ENCODE measurements at regions of chr6 and their contacts with region 1.

Region 1: DNA sequence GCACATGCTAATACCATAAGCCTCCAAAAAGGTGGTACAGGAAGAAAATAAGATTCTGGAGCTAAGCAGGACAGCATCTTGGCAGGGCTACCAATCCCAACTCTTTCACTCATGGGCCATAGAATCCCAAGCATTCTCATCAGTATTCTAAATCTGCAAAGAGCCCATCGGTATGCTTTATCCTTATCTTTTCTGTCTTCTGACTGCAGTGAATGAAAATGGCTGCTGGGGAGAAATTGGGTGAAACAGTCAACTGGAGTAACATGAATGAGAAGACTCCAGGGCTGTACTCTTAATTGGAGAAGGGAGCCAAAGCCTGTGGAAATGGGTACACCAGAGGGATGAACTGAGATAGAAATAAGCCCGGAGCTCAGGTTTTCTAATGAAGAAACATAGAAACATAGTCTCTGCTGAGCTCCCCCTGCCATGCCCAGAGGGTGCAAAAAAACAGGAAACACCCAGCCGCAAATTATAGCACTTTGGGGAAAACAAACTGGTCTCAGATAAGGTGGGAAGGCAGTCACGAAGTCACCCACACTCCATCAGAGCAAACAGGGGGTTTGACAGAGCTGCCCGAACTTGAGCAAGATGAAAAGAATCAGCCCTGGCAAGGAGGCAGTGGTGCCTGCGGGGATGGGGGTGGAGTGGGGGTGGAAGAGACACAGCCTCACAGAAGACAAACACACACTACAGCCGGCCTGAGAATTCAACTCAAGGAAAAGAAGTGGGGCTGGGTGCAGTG is 35.4 kb upstream of the E2F3 start:
- DNase-seq: peak; percentile 8 to 78 (median 58)
- ATAC-seq: peak; percentile 68
- H3K4me3 ChIP-seq: peak overlapping the region; percentile 9
- H3K4me3 Mint-ChIP-seq: peak overlapping the region; percentile 74
- H3K27ac ChIP-seq: peak overlapping the region; percentile 37 to 84
- H3K27ac Mint-ChIP-seq: peak overlapping the region; percentile 91
- H3K4me1 ChIP-seq: peaks cover 53% of the 10 kb centered on the region
- H3K4me1 Mint-ChIP-seq: peaks cover 59% of the 10 kb centered on the region
- H3K27me3 ChIP-seq: no peaks in the 10 kb centered on the region
- H3K27me3 Mint-ChIP-seq: no peaks in the 10 kb centered on the region
- CTCF ChIP-seq: no peak

Region 2: GRCh38 chr6:20212392-20213217 is 153.7 kb before region 1 on chr6 and contains the start of gene MBOAT1:
- CTCF ChIA-PET with region 1: no interaction called
- POLR2A ChIA-PET with region 1: interaction called, 12 read pairs
- intact Hi-C with region 1: no loop called
- DNase-seq: peak; percentile 27 to 86 (median 56)
- ATAC-seq: peak; percentile 78
- H3K4me3 ChIP-seq: peak within 1 kb of the TSS; percentile 83
- H3K4me3 Mint-ChIP-seq: peak within 1 kb of the TSS; percentile 99
- H3K27ac ChIP-seq: peak within 1 kb of the TSS; percentile 61 to 78
- H3K27ac Mint-ChIP-seq: peak within 1 kb of the TSS; percentile 97
- H3K4me1 ChIP-seq: peaks cover 28% of the 10 kb centered on the region
- H3K4me1 Mint-ChIP-seq: peaks cover 48% of the 10 kb centered on the region
- H3K27me3 ChIP-seq: no peaks in the 10 kb centered on the region
- H3K27me3 Mint-ChIP-seq: no peaks in the 10 kb centered on the region
- CTCF ChIP-seq: no peak
- total RNA-seq, gene MBOAT1: 17.2 to 18.5 TPM

Region 3: GRCh38 chr6:20334334-20334733 is 31.9 kb before region 1 on chr6:
- CTCF ChIA-PET with region 1: no interaction called
- POLR2A ChIA-PET with region 1: interaction called, 45 read pairs
- intact Hi-C with region 1: no loop called
- DNase-seq: no peak
- ATAC-seq: no peak
- H3K4me3 ChIP-seq: no peak overlapping the region
- H3K4me3 Mint-ChIP-seq: no peak overlapping the region
- H3K27ac ChIP-seq: peak overlapping the region in 1 of 2 donors; percentile 0
- H3K27ac Mint-ChIP-seq: no peak overlapping the region
- H3K4me1 ChIP-seq: peaks cover 5% of the 10 kb centered on the region
- H3K4me1 Mint-ChIP-seq: peaks cover 33% of the 10 kb centered on the region
- H3K27me3 ChIP-seq: no peaks in the 10 kb centered on the region
- H3K27me3 Mint-ChIP-seq: no peaks in the 10 kb centered on the region
- CTCF ChIP-seq: no peak

Region 4: DNA sequence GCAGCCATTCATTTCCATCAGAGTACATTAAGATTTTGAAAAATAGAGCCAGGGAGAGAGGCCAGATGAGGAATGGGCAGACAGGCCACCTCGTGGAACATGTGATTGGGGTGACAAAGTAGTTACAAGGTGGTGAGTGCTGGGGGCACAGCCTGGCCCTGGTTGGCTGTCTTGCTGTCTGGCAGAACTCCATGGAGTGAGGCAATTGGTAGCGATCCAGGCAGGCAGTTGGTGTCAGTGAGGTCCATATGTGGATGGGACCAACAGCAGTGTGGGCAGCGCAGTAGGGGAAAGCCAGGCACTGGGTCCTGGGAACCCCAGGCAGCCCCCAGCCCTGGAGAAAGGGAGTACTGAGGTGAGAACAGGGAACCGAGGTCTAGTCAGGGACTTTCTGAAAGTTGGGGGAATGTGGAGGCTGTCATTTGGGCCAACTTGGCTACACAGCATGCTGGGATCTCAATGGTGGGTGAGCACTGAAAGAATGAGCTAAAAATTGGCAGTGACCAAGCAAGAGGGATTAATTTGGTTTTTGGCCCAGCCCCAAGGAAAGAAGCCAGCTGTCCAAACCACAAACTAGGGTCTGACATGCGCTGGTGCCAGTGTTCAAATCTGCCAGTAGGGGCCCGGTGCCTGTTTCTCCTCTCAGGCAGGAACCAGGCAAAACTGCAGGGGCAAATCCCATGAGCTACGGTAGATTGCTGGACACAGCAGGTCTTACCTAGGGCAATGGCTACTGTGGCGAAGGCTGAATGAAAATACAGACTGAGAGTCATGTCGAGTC is 26.0 kb before region 1 on chr6:
- CTCF ChIA-PET with region 1: no interaction called
- POLR2A ChIA-PET with region 1: interaction called, 45 read pairs
- intact Hi-C with region 1: no loop called
- DNase-seq: no peak
- ATAC-seq: no peak
- H3K4me3 ChIP-seq: no peak overlapping the region
- H3K4me3 Mint-ChIP-seq: no peak overlapping the region
- H3K27ac ChIP-seq: no peak overlapping the region
- H3K27ac Mint-ChIP-seq: no peak overlapping the region
- H3K4me1 ChIP-seq: peaks cover 5% of the 10 kb centered on the region
- H3K4me1 Mint-ChIP-seq: peaks cover 32% of the 10 kb centered on the region
- H3K27me3 ChIP-seq: no peaks in the 10 kb centered on the region
- H3K27me3 Mint-ChIP-seq: no peaks in the 10 kb centered on the region
- CTCF ChIP-seq: no peak

Region 5: DNA sequence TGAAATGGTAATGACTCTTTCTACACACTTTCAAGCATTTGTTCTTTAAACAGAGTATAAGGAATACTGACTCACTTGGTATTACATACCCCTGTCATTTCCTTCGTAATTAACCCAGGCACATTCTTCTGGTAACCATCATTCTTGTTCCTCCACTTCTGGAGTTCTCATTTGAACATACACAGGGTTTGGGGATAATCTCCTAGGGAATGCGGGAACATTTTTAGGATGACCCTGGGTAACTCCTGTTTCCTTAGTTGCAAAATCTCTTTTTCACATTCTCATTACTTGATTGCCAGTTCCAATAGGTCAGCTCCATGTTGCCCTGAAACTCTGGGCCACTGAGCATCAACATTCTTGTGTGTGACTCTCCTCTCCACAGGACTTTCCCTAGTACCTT is 16.0 kb before region 1 on chr6:
- CTCF ChIA-PET with region 1: no interaction called
- POLR2A ChIA-PET with region 1: interaction called, 25 read pairs
- intact Hi-C with region 1: no loop called
- DNase-seq: no peak
- ATAC-seq: no peak
- H3K4me3 ChIP-seq: no peak overlapping the region
- H3K4me3 Mint-ChIP-seq: no peak overlapping the region
- H3K27ac ChIP-seq: no peak overlapping the region
- H3K27ac Mint-ChIP-seq: no peak overlapping the region
- H3K4me1 ChIP-seq: no peaks in the 10 kb centered on the region
- H3K4me1 Mint-ChIP-seq: no peaks in the 10 kb centered on the region
- H3K27me3 ChIP-seq: no peaks in the 10 kb centered on the region
- H3K27me3 Mint-ChIP-seq: no peaks in the 10 kb centered on the region
- CTCF ChIP-seq: no peak

Region 6: GRCh38 chr6:20377623-20378265 is 11.5 kb after region 1 on chr6:
- CTCF ChIA-PET with region 1: no interaction called
- POLR2A ChIA-PET with region 1: interaction called, 73 read pairs
- intact Hi-C with region 1: no loop called
- DNase-seq: no peak
- ATAC-seq: no peak
- H3K4me3 ChIP-seq: no peak overlapping the region
- H3K4me3 Mint-ChIP-seq: no peak overlapping the region
- H3K27ac ChIP-seq: no peak overlapping the region
- H3K27ac Mint-ChIP-seq: no peak overlapping the region
- H3K4me1 ChIP-seq: peaks cover 4% of the 10 kb centered on the region
- H3K4me1 Mint-ChIP-seq: peaks cover 19% of the 10 kb centered on the region
- H3K27me3 ChIP-seq: no peaks in the 10 kb centered on the region
- H3K27me3 Mint-ChIP-seq: no peaks in the 10 kb centered on the region
- CTCF ChIP-seq: no peak

Region 7: GRCh38 chr6:20401205-20402091 is 35.2 kb after region 1 on chr6 and contains the start of gene E2F3:
- CTCF ChIA-PET with region 1: interaction called, 7 read pairs
- POLR2A ChIA-PET with region 1: interaction called, 98 read pairs
- intact Hi-C with region 1: loop called in 1 of 2 experiments (anchors 5 kb)
- DNase-seq: peak; percentile 97 to 100 (median 98)
- ATAC-seq: peak; percentile 87
- H3K4me3 ChIP-seq: peak within 1 kb of the TSS; percentile 74
- H3K4me3 Mint-ChIP-seq: peak within 1 kb of the TSS; percentile 92
- H3K27ac ChIP-seq: peak within 1 kb of the TSS; percentile 35 to 85
- H3K27ac Mint-ChIP-seq: peak within 1 kb of the TSS; percentile 80
- H3K4me1 ChIP-seq: peaks cover 23% of the 10 kb centered on the region
- H3K4me1 Mint-ChIP-seq: peaks cover 44% of the 10 kb centered on the region
- H3K27me3 ChIP-seq: no peaks in the 10 kb centered on the region
- H3K27me3 Mint-ChIP-seq: no peaks in the 10 kb centered on the region
- CTCF ChIP-seq: no peak
- total RNA-seq, gene E2F3: 2.7 to 2.9 TPM

Measured in CD4-positive, alpha-beta T cell (primary cell).